ENCODE measurements at regions of chr7 and their contacts with region 1.

Region 1: GRCh38 chr7:142853739-142854371 is 1.0 kb upstream of the EPHB6 start:
- DNase-seq: peak; percentile 77 to 81 (median 78)
- H3K4me3 ChIP-seq: peak overlapping the region; percentile 77 to 96 (median 87)
- H3K4me3 Mint-ChIP-seq: peak overlapping the region; percentile 95 to 97
- H3K27ac ChIP-seq: peak overlapping the region; percentile 82 to 84
- H3K27ac Mint-ChIP-seq: peak overlapping the region; percentile 92 to 97 (median 94)
- H3K4me1 ChIP-seq: peaks cover 19 to 31% of the 10 kb centered on the region in 2 donors
- H3K4me1 Mint-ChIP-seq: peaks cover 26% of the 10 kb centered on the region
- H3K27me3 ChIP-seq: no peaks in the 10 kb centered on the region
- H3K27me3 Mint-ChIP-seq: peaks cover 0 to 3% (median 0%) of the 10 kb centered on the region in 3 donors
- CTCF ChIP-seq: peak; percentile 89

Region 2: GRCh38 chr7:143205560-143206293 is 351.9 kb after region 1 on chr7:
- intact Hi-C with region 1: loop called in 1 of 2 experiments (anchors 5 kb)
- DNase-seq: peak; percentile 83 to 89 (median 84)
- H3K4me3 ChIP-seq: peak overlapping the region; percentile 35 to 66 (median 47)
- H3K4me3 Mint-ChIP-seq: peak overlapping the region; percentile 67 to 85
- H3K27ac ChIP-seq: peak overlapping the region; percentile 7 to 74
- H3K27ac Mint-ChIP-seq: peak overlapping the region; percentile 58 to 94 (median 90)
- H3K4me1 ChIP-seq: peaks cover 25 to 33% of the 10 kb centered on the region in 2 donors
- H3K4me1 Mint-ChIP-seq: peaks cover 44% of the 10 kb centered on the region
- H3K27me3 ChIP-seq: no peaks in the 10 kb centered on the region
- H3K27me3 Mint-ChIP-seq: peaks cover 0 to 3% (median 3%) of the 10 kb centered on the region in 3 donors
- CTCF ChIP-seq: no peak

Region 3: DNA sequence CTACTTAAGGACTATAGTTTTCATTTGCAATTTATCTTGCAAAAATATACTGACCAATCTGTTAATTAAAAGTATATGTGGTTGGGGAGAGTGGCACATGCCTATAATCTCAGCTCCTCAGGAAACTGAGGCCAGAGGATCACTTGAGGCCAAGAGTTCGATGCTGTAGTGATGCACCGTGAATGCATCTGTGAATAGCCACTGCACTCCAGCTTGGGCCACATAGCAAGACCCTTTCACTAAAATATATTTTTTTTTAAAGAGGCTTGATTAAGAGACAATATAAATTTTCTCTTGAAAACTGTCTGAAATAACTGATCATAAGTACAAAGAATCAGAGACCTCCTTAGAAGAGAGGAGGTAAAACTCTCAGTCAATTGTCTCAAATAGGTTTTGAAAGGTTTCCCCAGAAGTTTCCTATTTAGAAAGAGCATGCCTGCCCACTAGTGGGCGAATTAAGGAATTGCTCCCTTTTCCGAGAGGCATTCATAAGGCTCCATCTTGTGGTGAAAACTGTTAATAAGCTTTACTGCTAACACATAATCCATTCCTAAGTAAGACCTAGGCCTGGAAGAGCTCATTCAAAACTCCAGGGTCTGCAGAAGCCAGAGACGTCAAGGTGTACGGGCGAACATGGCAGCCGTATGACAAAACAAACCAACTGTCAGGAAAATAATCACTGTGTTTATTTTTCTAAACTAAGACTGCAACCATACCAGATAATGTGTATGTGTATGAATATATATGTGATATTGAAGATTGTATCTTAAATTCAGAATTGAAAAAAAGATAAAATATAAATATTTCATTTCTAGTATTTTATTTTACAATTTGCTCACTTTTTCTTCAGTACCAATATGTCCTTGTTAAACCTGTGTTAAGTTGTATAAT is 361.2 kb after region 1 on chr7:
- intact Hi-C with region 1: loop called in 1 of 2 experiments (anchors 5 kb)
- DNase-seq: peak; percentile 77 to 93 (median 81)
- H3K4me3 ChIP-seq: no peak overlapping the region
- H3K4me3 Mint-ChIP-seq: no peak overlapping the region
- H3K27ac ChIP-seq: no peak overlapping the region
- H3K27ac Mint-ChIP-seq: no peak overlapping the region
- H3K4me1 ChIP-seq: peaks cover under 1 to 2% of the 10 kb centered on the region in 2 donors
- H3K4me1 Mint-ChIP-seq: peaks cover 19% of the 10 kb centered on the region
- H3K27me3 ChIP-seq: no peaks in the 10 kb centered on the region
- H3K27me3 Mint-ChIP-seq: peaks cover 0 to 3% (median 2%) of the 10 kb centered on the region in 3 donors
- CTCF ChIP-seq: peak; percentile 100